ENCODE measurements at regions of chr1 and their contacts with region 1.

Region 1: GRCh38 chr1:27525296-27526272 is 35.6 kb upstream of the WASF2 start:
- DNase-seq: peak; percentile 83
- H3K4me3 Mint-ChIP-seq: peak overlapping the region; percentile 69
- H3K27ac Mint-ChIP-seq: peak overlapping the region; percentile 72
- H3K4me1 Mint-ChIP-seq: peaks cover 56% of the 10 kb centered on the region
- H3K27me3 Mint-ChIP-seq: no peaks in the 10 kb centered on the region

Region 2: GRCh38 chr1:27087371-27088220 is 438.0 kb before region 1 on chr1:
- CTCF ChIA-PET with region 1: no interaction called
- intact Hi-C with region 1: no loop called
- DNase-seq: no peak
- H3K4me3 Mint-ChIP-seq: no peak overlapping the region
- H3K27ac Mint-ChIP-seq: no peak overlapping the region
- H3K4me1 Mint-ChIP-seq: peaks cover 5% of the 10 kb centered on the region
- H3K27me3 Mint-ChIP-seq: no peaks in the 10 kb centered on the region

Region 3: GRCh38 chr1:27341525-27342252 is 183.9 kb before region 1 on chr1 and contains the start of gene SYTL1:
- CTCF ChIA-PET with region 1: no interaction called
- intact Hi-C with region 1: loop called (anchors 5 kb)
- DNase-seq: peak; percentile 77
- H3K4me3 Mint-ChIP-seq: peak within 1 kb of the TSS; percentile 83
- H3K27ac Mint-ChIP-seq: peak within 1 kb of the TSS; percentile 85
- H3K4me1 Mint-ChIP-seq: peaks cover 49% of the 10 kb centered on the region
- H3K27me3 Mint-ChIP-seq: no peaks in the 10 kb centered on the region
- total RNA-seq, gene SYTL1: 28.5 to 29.2 TPM

Region 4: DNA sequence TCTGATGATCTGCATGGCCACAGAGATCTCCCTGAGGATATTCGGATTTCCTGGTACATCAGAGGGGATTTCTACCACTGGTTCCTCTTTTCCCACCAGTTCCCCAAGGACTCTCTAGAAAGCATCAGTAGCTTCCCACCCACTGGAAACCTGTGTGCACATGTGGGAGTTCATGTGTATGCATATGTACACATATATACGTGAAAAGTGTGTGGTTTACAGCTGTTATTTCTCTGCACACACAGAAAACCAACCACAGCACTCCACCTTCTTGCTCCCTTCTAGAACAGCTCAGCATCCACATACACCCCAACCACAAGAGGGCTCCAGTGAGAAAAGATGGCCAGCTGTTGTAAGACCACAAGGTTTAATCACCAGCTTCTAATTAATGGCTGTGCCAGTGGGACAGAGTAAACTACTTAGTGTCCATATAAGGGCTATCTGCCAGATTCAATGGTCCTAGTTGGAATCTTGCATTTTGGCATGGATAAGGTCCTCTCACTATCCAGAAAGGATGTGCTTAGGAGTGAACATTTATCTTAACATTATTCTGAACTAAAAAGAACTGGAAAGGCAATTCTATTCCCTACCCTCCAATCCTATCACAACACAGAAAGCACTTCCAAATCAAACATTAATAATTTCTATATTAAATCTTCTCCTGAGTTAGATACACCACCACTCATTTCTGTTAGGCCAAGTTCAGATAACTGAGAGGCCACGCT is 109.0 kb before region 1 on chr1:
- CTCF ChIA-PET with region 1: interaction called, 5 read pairs
- intact Hi-C with region 1: loop called (anchors 1 kb)
- DNase-seq: peak; percentile 72
- H3K4me3 Mint-ChIP-seq: no peak overlapping the region
- H3K27ac Mint-ChIP-seq: no peak overlapping the region
- H3K4me1 Mint-ChIP-seq: peaks cover 38% of the 10 kb centered on the region
- H3K27me3 Mint-ChIP-seq: no peaks in the 10 kb centered on the region

Region 5: GRCh38 chr1:27489910-27490741 is 35.5 kb before region 1 on chr1 and contains the start of gene WASF2:
- CTCF ChIA-PET with region 1: interaction called, 8 read pairs
- intact Hi-C with region 1: loop called (anchors 1 kb)
- DNase-seq: peak; percentile 98
- H3K4me3 Mint-ChIP-seq: peak within 1 kb of the TSS; percentile 89
- H3K27ac Mint-ChIP-seq: peak within 1 kb of the TSS; percentile 99
- H3K4me1 Mint-ChIP-seq: peaks cover 30% of the 10 kb centered on the region
- H3K27me3 Mint-ChIP-seq: no peaks in the 10 kb centered on the region
- total RNA-seq, gene WASF2: 105 to 106 TPM

Region 6: GRCh38 chr1:27568300-27569087 is 42.9 kb after region 1 on chr1:
- CTCF ChIA-PET with region 1: no interaction called
- intact Hi-C with region 1: loop called (anchors 1 kb)
- DNase-seq: peak; percentile 96
- H3K4me3 Mint-ChIP-seq: peak overlapping the region; percentile 63
- H3K27ac Mint-ChIP-seq: no peak overlapping the region
- H3K4me1 Mint-ChIP-seq: peaks cover 13% of the 10 kb centered on the region
- H3K27me3 Mint-ChIP-seq: no peaks in the 10 kb centered on the region

Region 7: DNA sequence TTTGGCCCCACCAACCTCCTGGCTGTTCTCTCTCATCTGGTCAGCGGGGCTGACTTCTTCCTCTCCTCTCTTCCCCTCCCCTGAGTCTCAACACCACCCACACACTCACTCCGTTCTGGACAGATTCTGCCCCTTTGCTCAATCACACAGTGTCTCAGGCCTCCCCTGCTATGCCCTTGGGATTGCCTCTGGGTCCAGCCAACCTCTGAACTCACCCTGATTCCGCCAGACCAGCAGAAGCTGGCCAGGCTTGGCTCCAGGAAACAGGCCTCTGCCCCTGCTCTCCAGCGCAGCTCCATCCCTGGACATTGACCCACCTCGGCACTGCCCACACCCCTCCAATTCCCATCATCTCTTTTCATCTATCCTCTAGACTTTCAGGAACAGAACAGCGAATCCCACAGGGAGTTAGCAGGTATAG is 56.2 kb after region 1 on chr1:
- CTCF ChIA-PET with region 1: no interaction called
- intact Hi-C with region 1: no loop called
- DNase-seq: no peak
- H3K4me3 Mint-ChIP-seq: no peak overlapping the region
- H3K27ac Mint-ChIP-seq: no peak overlapping the region
- H3K4me1 Mint-ChIP-seq: peaks cover 3% of the 10 kb centered on the region
- H3K27me3 Mint-ChIP-seq: no peaks in the 10 kb centered on the region

Region 8: GRCh38 chr1:27592931-27593677 is 67.5 kb after region 1 on chr1:
- CTCF ChIA-PET with region 1: no interaction called
- intact Hi-C with region 1: no loop called
- DNase-seq: no peak
- H3K4me3 Mint-ChIP-seq: no peak overlapping the region
- H3K27ac Mint-ChIP-seq: no peak overlapping the region
- H3K4me1 Mint-ChIP-seq: no peaks in the 10 kb centered on the region
- H3K27me3 Mint-ChIP-seq: no peaks in the 10 kb centered on the region

Region 9: GRCh38 chr1:27816921-27817630 is 291.5 kb after region 1 on chr1:
- CTCF ChIA-PET with region 1: no interaction called
- intact Hi-C with region 1: no loop called
- DNase-seq: no peak
- H3K4me3 Mint-ChIP-seq: no peak overlapping the region
- H3K27ac Mint-ChIP-seq: no peak overlapping the region
- H3K4me1 Mint-ChIP-seq: no peaks in the 10 kb centered on the region
- H3K27me3 Mint-ChIP-seq: no peaks in the 10 kb centered on the region

Measured in activated naive CD4-positive, alpha-beta T cell treated with anti-CD3 and anti-CD28 coated beads for 36 hours (primary cell).